Dorsolateral prefrontal cortex (tissue), 120 donors: ENCODE measurements at regions of chr3 and their contacts with region 1.

Region 1: DNA sequence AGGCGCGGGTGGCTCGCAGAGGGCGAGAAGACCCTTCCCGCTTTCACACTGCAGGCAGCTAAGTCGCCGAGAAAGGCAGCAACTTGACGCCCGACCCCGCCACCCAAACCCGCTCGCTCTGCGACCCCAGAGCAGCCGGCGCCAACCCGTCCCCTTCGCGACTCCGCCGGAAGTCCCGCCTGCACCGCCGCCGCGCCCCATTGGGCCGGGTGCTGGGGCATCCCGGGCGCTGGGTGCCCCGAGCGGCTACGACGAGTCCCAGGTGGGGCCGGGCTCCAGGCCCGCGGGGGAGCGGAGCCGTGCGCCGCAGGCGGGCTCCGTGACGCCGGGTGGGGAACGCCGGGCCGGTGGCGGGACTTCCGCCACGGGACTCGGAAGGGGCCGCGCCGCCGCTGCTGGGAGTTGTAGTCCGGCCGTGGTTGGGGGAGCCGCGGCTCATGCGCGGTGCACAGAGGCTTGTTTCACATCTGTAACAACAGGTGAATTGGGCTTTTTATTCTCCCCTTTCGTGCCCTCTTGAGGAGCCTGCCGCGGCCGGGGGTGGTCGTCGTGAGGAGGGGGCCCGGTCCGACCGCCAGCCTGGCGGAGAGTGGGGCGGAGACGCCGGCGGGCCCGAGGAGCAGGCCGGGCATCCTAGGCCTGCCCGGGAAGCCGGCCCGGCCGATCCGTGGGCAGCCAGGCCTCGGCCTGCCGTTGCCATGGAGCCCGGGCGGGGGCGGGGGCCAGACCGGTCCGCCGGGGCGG is at the start of gene DHX30:
- DNase-seq: peak; percentile 80 to 93 (median 90)
- H3K4me3 ChIP-seq: peak within 1 kb of the TSS; percentile 62 to 99 (median 93)
- H3K27ac ChIP-seq: peak within 1 kb of the TSS; percentile 69 to 99 (median 95)
- H3K27me3 ChIP-seq: no peaks in the 10 kb centered on the region
- CTCF ChIP-seq: peak in 15 of 56 donors; percentile 3 to 43 (median 18)
- total RNA-seq, gene DHX30: 83.4 to 134 (median 107) TPM

Region 2: DNA sequence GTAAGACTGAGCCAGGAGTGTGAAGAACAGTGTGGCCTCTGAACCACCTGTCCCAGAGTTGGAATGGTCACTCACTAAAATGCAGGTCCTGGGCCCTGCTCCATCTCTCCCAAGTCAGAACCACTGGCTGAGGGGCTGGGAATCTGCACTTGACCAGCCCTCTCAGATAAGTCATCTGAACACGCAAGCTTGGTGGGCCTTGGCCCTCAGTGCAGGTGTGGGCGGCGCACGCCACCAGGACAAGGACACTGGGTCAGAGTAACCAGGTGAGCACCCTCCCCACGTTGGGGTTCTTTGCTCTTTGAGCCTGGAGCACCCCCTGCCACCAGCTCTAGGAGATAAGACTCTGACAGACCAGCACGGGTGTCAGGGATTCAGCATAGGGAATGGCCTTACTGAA is 563.0 kb before region 1 on chr3:
- intact Hi-C with region 1: no loop called
- DNase-seq: no peak
- H3K4me3 ChIP-seq: no peak overlapping the region
- H3K27ac ChIP-seq: no peak overlapping the region
- H3K27me3 ChIP-seq: no peaks in the 10 kb centered on the region
- CTCF ChIP-seq: no peak

Region 3: DNA sequence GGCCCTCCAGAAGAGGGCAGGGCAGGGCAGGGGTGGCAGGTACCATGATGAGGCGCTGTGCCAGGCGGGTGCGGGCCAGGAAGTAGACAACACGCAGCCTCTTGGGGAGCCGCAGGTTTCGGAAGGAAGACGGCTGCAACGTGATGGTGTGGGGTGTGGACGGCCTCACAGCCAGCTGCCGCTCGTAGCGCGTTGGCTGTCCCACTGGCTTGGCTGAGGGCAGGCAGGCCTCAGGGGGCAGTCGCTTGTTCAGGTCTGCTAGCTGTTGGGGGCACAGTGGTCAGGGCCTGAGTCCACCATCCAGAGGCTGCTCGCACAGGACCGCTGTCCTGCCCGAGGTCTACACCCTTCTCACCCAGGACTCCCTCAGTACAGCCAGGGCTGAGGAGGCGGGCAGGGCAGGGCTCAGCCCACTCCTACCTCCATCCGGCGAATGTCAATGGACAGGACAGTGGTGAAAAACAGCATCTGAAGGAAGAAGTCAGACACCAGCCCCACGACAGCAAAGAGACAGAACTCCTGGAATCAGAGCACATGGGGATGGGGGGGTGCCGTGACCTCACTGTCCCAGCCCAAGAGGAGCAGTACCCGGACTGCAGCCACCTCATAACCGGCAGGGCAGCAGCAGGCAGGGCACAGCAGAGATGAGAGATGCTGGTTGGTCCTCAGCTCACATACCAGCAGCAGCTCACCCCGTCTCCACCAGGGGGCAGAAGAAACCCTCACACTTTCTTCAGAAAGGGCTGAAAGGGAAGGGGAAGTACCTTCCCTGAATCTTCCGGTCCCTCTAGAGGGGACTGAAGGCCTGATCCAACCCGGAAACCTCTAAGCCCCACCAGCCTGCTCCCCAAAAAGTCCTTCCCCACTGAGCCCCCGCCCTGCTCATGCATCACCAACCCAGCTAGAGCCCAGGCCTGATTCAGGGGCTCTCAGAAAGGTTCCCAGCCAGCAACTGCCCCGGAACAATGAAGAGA is 382.1 kb before region 1 on chr3:
- intact Hi-C with region 1: loop called in 1 of 2 experiments (anchors 5 kb)
- DNase-seq: peak; percentile 81 to 94 (median 87)
- H3K4me3 ChIP-seq: peak overlapping the region in 15 of 59 donors; percentile 4 to 50 (median 23)
- H3K27ac ChIP-seq: peak overlapping the region in 57 of 59 donors; percentile 25 to 91 (median 75)
- H3K27me3 ChIP-seq: no peaks in the 10 kb centered on the region
- CTCF ChIP-seq: peak; percentile 68 to 97 (median 91)

Region 4: GRCh38 chr3:48119505-48120193 is 316.7 kb after region 1 on chr3:
- intact Hi-C with region 1: no loop called
- DNase-seq: no peak
- H3K4me3 ChIP-seq: no peak overlapping the region
- H3K27ac ChIP-seq: peak overlapping the region in 2 of 59 donors; percentile 22 to 38
- H3K27me3 ChIP-seq: no peaks in the 10 kb centered on the region
- CTCF ChIP-seq: no peak